ENCODE measurements at regions of chr20 and their contacts with region 1.

Region 1: DNA sequence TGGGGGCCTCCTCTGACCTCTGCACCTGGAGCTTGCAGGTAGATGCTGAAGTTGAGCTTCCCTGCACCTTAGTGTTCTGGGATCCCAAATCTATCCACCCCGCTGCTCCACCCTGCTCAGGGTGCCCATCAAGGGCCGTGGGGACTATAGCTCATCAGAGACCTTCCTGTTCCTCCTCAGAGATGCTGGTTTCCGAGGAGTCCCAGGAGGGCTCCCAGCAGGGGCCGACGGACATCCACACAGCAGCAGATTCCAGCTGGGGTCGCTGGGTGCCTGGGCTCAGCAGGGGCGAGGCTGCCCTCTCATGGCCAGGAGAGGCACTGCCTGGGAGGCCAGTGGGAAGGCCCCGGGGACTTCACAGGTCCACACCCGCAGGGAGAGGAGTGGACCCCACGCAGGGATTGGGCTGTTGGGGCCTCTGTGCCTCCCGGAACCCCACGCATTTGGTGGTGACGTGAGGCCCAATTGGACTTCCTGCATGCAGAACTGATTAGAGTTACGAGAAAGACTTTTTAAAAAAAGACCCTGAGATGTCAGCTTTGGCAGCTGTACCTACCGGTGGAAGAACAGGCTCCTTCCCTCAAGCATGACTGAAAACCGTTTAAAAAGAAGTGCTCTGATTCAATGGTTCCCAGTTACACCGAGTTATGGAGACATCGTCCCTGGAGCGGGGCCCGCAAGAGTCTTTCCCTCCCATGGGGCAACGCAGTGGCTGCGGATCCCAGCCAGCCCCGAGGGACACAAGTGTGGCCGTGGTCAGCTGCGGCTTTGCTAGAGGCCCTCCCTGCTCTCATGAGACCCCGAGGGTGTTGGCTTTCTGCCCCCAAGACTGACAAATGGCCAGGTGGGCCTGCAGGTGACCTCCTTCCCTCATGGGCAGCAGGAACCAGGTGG is 25.3 kb upstream of the SLCO4A1 start:
- DNase-seq: no peak
- ATAC-seq: peak; percentile 90
- H3K4me3 ChIP-seq: no peak overlapping the region
- H3K27ac ChIP-seq: 0 out of 2 replicates have a peak overlapping the region, but pooled peaks have one; percentile 67
- H3K4me1 ChIP-seq: peaks cover 28% of the 10 kb centered on the region
- H3K27me3 ChIP-seq: no peaks in the 10 kb centered on the region; a peak in 1 of 4 replicates
- CTCF ChIP-seq: peak; percentile 96 to 99 (median 97); a peak in 5 of 6 replicates
- EP300 ChIP-seq: no peak
- POLR2A ChIP-seq: no peak
- RAD21 ChIP-seq: peak; percentile 89

Region 2: GRCh38 chr20:62302341-62303058 is 314.5 kb before region 1 on chr20 and contains the start of gene ADRM1:
- CTCF ChIA-PET with region 1: interaction called, 4 read pairs
- POLR2A ChIA-PET with region 1: no interaction called
- RAD21 ChIA-PET with region 1: no interaction called
- SMC1A ChIA-PET with region 1: no interaction called
- in situ Hi-C with region 1: loop called (anchors 10 kb)
- intact Hi-C with region 1: loop called (anchors 5 kb)
- DNase-seq: peak; percentile 76
- ATAC-seq: peak; percentile 93
- H3K4me3 ChIP-seq: peak within 1 kb of the TSS; percentile 82
- H3K27ac ChIP-seq: peak within 1 kb of the TSS; percentile 90
- H3K4me1 ChIP-seq: peaks cover 10% of the 10 kb centered on the region
- H3K27me3 ChIP-seq: no peaks in the 10 kb centered on the region
- CTCF ChIP-seq: peak; percentile 80 to 99 (median 92)
- EP300 ChIP-seq: peak in 1 of 2 experiments; percentile 53; a peak in 1 of 4 replicates
- POLR2A ChIP-seq: peak; percentile 91
- RAD21 ChIP-seq: peak; percentile 64
- polyA plus RNA-seq, gene ADRM1: 3.4 to 13.6 TPM

Region 3: DNA sequence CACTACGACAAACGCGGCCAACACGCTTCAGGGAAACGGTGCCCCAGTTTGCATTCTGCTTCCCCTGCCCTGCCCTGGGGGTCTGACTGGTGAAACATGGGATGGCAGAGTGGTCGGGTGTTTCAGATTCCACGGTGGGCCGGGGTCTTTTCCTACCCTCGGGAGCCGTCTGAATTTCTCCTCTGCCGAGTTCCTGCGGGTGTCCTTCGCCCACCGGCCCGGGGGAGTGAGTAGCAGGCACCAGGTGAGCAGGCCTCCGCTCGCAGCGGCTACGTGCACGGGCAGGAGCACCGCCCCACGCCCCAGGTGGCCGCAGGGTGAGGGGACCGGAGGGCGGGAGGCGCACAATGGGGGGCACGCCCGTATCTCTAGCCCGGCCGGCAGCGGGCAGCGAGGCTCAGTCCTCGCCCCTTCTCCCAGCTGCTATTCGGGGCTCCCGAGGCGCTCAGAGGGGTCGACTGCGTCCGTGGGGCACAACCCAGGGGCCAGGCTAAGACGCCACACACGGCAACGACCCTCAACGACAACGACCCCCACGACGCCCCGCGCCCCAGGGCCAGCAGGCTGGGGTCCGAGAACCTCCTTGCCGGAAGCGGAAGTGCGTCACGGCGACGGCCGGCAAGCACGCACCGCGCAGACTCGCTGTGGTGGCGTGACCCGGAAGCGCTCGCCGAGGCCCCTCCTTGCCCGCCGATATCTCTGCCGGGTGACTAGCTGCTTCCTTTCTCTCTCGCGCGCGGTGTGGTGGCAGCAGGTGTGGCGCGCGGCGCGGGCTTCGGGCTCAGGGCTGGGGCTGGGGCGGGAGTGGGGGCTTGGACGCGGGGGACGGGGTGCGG is 230.4 kb before region 1 on chr20 and contains the start of gene RPS21:
- CTCF ChIA-PET with region 1: interaction called, 3 read pairs
- POLR2A ChIA-PET with region 1: no interaction called
- RAD21 ChIA-PET with region 1: no interaction called
- SMC1A ChIA-PET with region 1: interaction called, 3 read pairs
- in situ Hi-C with region 1: no loop called
- intact Hi-C with region 1: loop called (anchors 10 kb)
- DNase-seq: peak; percentile 54
- ATAC-seq: peak; percentile 92
- H3K4me3 ChIP-seq: peak within 1 kb of the TSS; percentile 100
- H3K27ac ChIP-seq: peak within 1 kb of the TSS; percentile 93
- H3K4me1 ChIP-seq: peaks cover 4% of the 10 kb centered on the region
- H3K27me3 ChIP-seq: no peaks in the 10 kb centered on the region
- CTCF ChIP-seq: no peak
- EP300 ChIP-seq: no peak
- POLR2A ChIP-seq: peak; percentile 94
- RAD21 ChIP-seq: no peak
- polyA plus RNA-seq, gene RPS21: 3,290 to 4,046 TPM

Region 4: DNA sequence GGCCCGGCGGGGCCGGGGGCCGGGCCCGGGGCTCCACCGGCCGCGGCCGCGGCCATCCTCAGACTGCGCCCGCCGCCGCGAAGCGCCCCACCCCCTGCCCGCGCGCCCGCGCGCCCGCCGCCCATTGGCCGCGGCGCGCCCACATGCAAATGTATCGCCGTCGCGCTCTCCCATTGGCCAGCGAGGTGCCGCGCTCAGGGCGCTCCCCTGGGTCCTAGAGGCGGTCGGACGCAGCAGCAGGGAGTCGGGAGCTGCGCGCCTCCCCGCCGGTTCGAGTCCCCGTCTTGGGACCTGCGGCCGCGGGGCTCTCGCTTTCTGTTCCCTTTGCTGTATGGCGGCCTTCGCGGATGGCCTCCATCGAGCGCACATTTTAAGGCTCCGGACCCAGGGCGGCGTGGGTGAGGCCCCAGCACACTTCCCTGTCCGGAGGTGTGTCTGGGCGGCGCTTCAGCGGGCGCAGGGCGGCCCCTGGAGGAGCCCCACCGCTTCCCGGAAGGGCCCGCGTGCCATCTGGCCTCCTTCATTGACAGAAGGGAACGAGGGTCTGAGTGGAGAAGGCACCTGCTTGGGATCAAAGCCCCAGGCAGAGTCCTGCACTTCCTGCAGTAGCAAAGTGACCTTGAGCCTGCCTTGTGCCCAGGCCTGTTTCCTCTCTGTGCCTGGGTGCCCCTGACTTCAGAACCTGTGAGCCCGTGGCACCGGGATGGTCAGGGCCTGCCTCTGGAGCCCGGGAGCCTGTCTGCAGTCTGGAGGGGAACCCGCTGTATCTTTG is 209.6 kb before region 1 on chr20 and contains the start of gene CABLES2:
- CTCF ChIA-PET with region 1: interaction called, 23 read pairs
- POLR2A ChIA-PET with region 1: no interaction called
- RAD21 ChIA-PET with region 1: interaction called, 5 read pairs
- SMC1A ChIA-PET with region 1: interaction called, 4 read pairs
- in situ Hi-C with region 1: no loop called
- intact Hi-C with region 1: no loop called
- DNase-seq: peak; percentile 58
- ATAC-seq: peak; percentile 94
- H3K4me3 ChIP-seq: peak within 1 kb of the TSS; percentile 73
- H3K27ac ChIP-seq: peak within 1 kb of the TSS; percentile 85
- H3K4me1 ChIP-seq: peaks cover 12% of the 10 kb centered on the region
- H3K27me3 ChIP-seq: no peaks in the 10 kb centered on the region
- CTCF ChIP-seq: peak in 1 of 3 experiments; percentile 10; a peak in 1 of 6 replicates
- EP300 ChIP-seq: no peak
- POLR2A ChIP-seq: peak; percentile 57; the same call in 1 of the 2 replicates
- RAD21 ChIP-seq: no peak
- polyA plus RNA-seq, gene CABLES2: 2.3 to 2.9 TPM

Region 5: GRCh38 chr20:62500237-62500864 is 116.6 kb before region 1 on chr20:
- CTCF ChIA-PET with region 1: interaction called, 41 read pairs
- POLR2A ChIA-PET with region 1: interaction called, 5 read pairs
- RAD21 ChIA-PET with region 1: interaction called, 33 read pairs
- SMC1A ChIA-PET with region 1: interaction called, 12 read pairs
- in situ Hi-C with region 1: loop called (anchors 5 kb)
- intact Hi-C with region 1: loop called (anchors 1 kb)
- DNase-seq: no peak
- ATAC-seq: peak; percentile 67
- H3K4me3 ChIP-seq: no peak overlapping the region
- H3K27ac ChIP-seq: no peak overlapping the region
- H3K4me1 ChIP-seq: peaks cover 18% of the 10 kb centered on the region
- H3K27me3 ChIP-seq: no peaks in the 10 kb centered on the region
- CTCF ChIP-seq: peak; percentile 80 to 93 (median 92)
- EP300 ChIP-seq: no peak
- POLR2A ChIP-seq: no peak
- RAD21 ChIP-seq: peak; percentile 85

Region 6: GRCh38 chr20:62642040-62642665 is 25.2 kb after region 1 on chr20 and contains the start of gene SLCO4A1:
- CTCF ChIA-PET with region 1: interaction called, 14 read pairs
- POLR2A ChIA-PET with region 1: interaction called, 8 read pairs
- RAD21 ChIA-PET with region 1: interaction called, 15 read pairs
- SMC1A ChIA-PET with region 1: interaction called, 3 read pairs
- in situ Hi-C with region 1: no loop called
- intact Hi-C with region 1: no loop called
- DNase-seq: no peak
- ATAC-seq: peak; percentile 86
- H3K4me3 ChIP-seq: peak within 1 kb of the TSS; percentile 68
- H3K27ac ChIP-seq: peak within 1 kb of the TSS; percentile 46
- H3K4me1 ChIP-seq: peaks cover 34% of the 10 kb centered on the region
- H3K27me3 ChIP-seq: peaks cover 0 to 3% of the 10 kb centered on the region in 2 experiments; a peak in 1 of 4 replicates
- CTCF ChIP-seq: no peak
- EP300 ChIP-seq: no peak
- POLR2A ChIP-seq: peak; percentile 81
- RAD21 ChIP-seq: no peak
- polyA plus RNA-seq, gene SLCO4A1: 2.1 to 4.7 TPM

Region 7: GRCh38 chr20:62652051-62652926 is 35.3 kb after region 1 on chr20:
- CTCF ChIA-PET with region 1: interaction called, 7 read pairs
- POLR2A ChIA-PET with region 1: interaction called, 4 read pairs
- RAD21 ChIA-PET with region 1: interaction called, 8 read pairs
- SMC1A ChIA-PET with region 1: interaction called, 12 read pairs
- in situ Hi-C with region 1: no loop called
- intact Hi-C with region 1: no loop called
- DNase-seq: peak; percentile 85
- ATAC-seq: peak; percentile 84
- H3K4me3 ChIP-seq: peak overlapping the region; percentile 69
- H3K27ac ChIP-seq: peak overlapping the region; percentile 98
- H3K4me1 ChIP-seq: peaks cover 40% of the 10 kb centered on the region
- H3K27me3 ChIP-seq: no peaks in the 10 kb centered on the region
- CTCF ChIP-seq: no peak
- EP300 ChIP-seq: peak; percentile 81 to 88; a peak in 3 of 4 replicates
- POLR2A ChIP-seq: peak; percentile 77
- RAD21 ChIP-seq: no peak